KBM-7 (cell line): ENCODE measurements at regions of chr1 and their contacts with region 1.

Region 1: GRCh38 chr1:46718727-46719622 is at the start of gene EFCAB14:
- DNase-seq: peak; percentile 99

Region 2: DNA sequence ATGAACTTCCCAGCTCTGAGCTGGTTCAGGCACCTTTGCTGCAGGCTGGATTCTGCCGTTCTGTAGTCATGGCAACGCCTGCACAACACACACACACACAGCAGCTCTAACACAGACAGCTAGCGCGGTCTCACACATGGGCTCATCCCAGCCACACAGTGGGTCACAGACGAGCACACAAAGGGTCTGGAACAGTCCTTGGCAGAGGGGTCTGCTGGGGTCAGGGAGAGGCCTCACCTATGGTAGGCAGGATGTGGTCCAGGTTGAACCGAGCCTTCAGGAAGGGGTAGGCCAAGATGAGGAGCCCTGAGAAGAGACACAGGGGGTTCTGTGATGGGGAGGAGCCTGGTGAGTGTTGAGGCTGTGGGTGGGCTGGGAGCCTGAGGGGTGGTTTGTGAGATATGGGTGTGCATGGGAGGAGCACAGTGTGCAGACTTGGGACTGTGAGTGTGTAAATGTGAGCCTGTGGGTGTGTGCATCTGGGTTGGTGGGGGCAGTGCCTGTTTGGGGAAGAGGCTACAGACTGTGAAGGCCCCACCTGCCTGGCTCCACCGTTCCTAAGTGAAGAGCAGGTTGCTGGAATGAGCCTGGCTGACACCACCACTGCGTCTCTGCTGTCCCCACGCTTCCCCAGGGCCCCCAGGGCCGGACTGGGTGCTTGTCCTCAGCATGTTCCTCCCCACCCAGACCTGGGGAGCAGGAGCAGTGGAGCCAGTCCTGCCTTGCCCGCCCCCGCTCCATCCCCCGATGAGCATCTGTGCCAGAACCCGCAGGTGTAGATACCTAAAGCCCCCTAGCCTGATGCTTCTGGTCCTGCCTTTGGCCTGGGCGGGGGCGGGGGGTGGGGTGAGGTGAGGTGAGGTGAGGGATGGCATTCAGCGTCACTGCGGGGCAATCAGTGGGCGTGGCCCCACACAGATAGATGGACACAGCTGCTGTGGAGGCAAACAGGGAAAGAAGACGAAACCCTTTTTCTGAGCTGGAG is 169.0 kb before region 1 on chr1:
- in situ Hi-C with region 1: loop called (anchors 25 kb)
- DNase-seq: peak; percentile 32